PC-9 (cell line): ENCODE measurements at regions of chr5 and their contacts with region 1.

Region 1: DNA sequence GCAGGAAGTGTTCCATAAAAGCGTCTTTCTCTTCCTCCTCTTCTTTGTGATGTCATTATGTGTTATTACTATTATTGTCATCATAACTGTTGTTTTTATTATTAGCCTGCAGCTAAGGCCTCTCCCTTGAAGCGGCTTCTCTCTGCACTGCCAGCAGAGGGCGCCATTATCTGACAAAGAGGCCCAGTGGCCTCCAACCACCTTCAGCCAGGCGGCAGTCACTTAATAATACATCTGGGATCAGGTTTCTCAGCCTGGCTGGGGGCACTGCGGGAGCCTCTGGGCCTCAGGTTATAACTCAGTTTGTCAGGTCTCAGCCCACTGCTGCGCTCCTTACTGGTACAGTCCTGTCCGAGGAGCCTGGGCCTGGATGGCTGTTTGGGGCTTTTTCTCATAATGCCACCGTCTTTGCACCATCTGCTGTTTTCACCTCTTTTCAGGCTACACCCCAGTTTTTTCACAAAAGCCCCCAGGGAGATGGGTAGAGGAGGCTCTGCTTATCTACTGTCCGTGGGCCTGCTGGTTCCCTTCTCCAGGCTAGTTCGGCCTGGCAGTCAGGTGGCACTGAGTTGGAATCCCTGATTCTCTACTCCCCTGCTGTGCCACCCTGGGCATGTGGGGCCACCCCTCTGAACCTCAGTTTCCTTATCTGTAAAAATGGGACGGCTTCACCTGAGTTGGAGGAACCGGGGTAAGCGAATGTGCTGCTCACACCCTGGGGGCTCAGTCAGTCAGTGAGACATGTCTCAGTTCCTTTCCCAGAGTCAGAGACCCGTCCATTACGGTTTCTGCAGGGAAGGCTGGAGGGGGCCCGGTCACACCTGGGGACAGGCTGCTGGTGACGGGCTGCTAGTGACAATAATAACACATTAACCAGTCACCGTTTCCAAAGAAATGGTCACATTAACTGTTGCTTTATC is 282.1 kb downstream of the NSG2 start:
- DNase-seq: peak in 1 of 2 experiments; percentile 68
- H3K4me3 ChIP-seq: no peak overlapping the region
- H3K27ac ChIP-seq: no peak overlapping the region
- H3K4me1 ChIP-seq: no peaks in the 10 kb centered on the region
- H3K27me3 ChIP-seq: peaks cover 71% of the 10 kb centered on the region
- CTCF ChIP-seq: peak; percentile 90

Region 2: DNA sequence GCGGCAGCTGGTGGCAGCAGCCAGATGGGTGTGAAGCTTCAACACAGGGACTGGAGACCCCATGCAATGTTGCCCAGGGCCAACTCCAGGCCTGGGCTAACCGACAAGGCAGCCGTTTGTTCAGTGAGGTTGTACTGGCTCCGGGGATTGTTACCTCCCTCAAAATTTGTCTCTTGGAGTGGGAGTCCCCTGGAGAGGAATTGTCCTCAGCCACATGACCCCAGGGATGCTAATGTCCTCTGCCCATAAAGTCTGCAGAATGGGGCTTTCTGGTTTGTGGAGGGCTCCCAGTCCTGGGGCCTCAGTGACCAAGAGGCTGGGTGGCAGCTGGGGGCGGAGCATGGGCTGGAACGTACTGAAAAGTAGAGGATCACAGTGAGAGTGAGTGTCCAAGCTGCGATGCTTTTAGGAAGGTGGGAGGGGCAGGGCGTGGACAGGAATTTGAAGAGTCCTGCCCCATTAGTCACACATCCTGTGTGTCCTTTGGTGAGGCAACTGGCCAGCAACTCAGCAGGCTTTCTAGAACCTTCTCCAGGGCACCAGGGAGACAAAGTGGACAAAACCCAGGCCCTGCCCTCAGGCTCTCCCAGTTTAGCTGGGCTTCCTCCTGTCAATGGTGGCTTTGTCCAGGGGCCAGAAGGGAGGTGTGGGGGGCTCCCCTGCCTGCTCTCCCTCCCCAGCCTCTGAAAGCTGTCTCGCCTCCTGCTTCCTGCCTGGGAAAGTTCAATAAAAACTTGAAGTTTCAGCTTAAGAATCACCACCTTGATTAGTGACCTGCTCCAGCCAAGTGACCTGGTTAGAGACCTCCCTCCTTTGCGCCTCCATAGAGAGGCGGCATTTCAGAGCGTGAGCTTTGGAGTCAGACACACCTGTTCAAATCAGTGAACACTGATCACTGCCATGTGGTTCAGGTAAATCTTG is 168.0 kb before region 1 on chr5:
- CTCF ChIA-PET with region 1: interaction called, 14 read pairs
- POLR2A ChIA-PET with region 1: no interaction called
- intact Hi-C with region 1: no loop called
- DNase-seq: no peak
- H3K4me3 ChIP-seq: no peak overlapping the region
- H3K27ac ChIP-seq: no peak overlapping the region
- H3K4me1 ChIP-seq: no peaks in the 10 kb centered on the region
- H3K27me3 ChIP-seq: peaks cover 60% of the 10 kb centered on the region
- CTCF ChIP-seq: no peak

Region 3: DNA sequence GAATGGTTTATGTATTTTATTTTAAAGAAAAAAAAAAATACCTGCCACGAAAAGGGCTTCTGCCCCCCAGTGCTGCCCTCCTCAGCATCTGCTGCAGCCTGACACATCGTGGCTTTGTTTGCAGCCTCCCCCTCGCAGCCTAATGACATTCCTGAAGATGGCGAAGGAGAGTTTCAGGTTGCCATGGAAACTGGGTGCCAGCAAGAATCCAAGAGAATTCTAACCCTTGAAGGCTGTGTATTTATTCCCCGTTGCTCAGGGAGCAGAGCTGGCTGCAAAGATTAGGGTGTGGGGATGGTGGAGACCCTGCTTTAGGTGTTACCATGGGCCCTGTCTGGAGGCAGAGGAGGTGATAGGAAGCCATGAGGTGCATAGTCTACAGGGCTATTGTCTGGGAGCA is 155.4 kb before region 1 on chr5:
- CTCF ChIA-PET with region 1: no interaction called
- POLR2A ChIA-PET with region 1: no interaction called
- intact Hi-C with region 1: no loop called
- DNase-seq: no peak
- H3K4me3 ChIP-seq: no peak overlapping the region
- H3K27ac ChIP-seq: no peak overlapping the region
- H3K4me1 ChIP-seq: no peaks in the 10 kb centered on the region
- H3K27me3 ChIP-seq: peaks cover 52% of the 10 kb centered on the region
- CTCF ChIP-seq: no peak

Region 4: GRCh38 chr5:174348311-174348981 is 20.9 kb after region 1 on chr5:
- CTCF ChIA-PET with region 1: no interaction called
- POLR2A ChIA-PET with region 1: no interaction called
- intact Hi-C with region 1: no loop called
- DNase-seq: no peak
- H3K4me3 ChIP-seq: no peak overlapping the region
- H3K27ac ChIP-seq: no peak overlapping the region
- H3K4me1 ChIP-seq: no peaks in the 10 kb centered on the region
- H3K27me3 ChIP-seq: peaks cover 32% of the 10 kb centered on the region
- CTCF ChIP-seq: no peak

Region 5: GRCh38 chr5:174793684-174794328 is 466.2 kb after region 1 on chr5:
- CTCF ChIA-PET with region 1: no interaction called
- POLR2A ChIA-PET with region 1: no interaction called
- intact Hi-C with region 1: loop called (anchors 2 kb)
- DNase-seq: peak in 1 of 2 experiments; percentile 53
- H3K4me3 ChIP-seq: no peak overlapping the region
- H3K27ac ChIP-seq: no peak overlapping the region
- H3K4me1 ChIP-seq: no peaks in the 10 kb centered on the region
- H3K27me3 ChIP-seq: peaks cover 53% of the 10 kb centered on the region
- CTCF ChIP-seq: peak; percentile 90